ENCODE measurements at regions of chr4 and their contacts with region 1.

Region 1: GRCh38 chr4:52588097-52588782 is 70.9 kb downstream of the USP46 start:
- DNase-seq: peak in 1 of 9 donors; percentile 2
- ATAC-seq: peak; percentile 25
- H3K4me3 ChIP-seq: no peak overlapping the region
- H3K4me3 Mint-ChIP-seq: peak overlapping the region in 1 of 10 donors; percentile 31
- H3K27ac ChIP-seq: no peak overlapping the region
- H3K27ac Mint-ChIP-seq: peak overlapping the region in 2 of 9 donors; percentile 38 to 72
- H3K4me1 ChIP-seq: peaks cover 0 to 5% of the 10 kb centered on the region in 2 donors
- H3K4me1 Mint-ChIP-seq: peaks cover 6 to 24% (median 8%) of the 10 kb centered on the region in 7 donors
- H3K27me3 ChIP-seq: no peaks in the 10 kb centered on the region
- H3K27me3 Mint-ChIP-seq: peaks cover 0 to 10% (median 5%) of the 10 kb centered on the region in 5 donors

Region 2: DNA sequence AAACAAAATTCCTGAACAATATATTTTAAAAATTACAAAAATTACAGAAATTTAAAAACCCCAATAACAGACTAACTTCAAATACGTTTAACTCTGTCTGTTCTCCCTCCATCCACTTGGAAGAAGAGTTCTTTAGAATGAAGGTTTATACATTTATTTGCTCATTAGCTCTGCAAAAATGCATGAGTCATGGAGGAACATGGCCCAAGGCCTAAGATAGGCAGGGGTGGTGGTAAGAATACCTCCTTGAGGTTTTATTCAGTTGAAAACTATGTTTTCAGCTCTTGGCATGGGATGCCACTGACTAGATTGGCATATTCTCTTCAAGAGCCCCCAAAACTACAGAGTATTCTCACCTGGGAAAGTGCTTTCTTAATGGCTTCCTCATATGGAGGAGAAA is 559.3 kb before region 1 on chr4:
- CTCF ChIA-PET with region 1: no interaction called
- POLR2A ChIA-PET with region 1: no interaction called
- intact Hi-C with region 1: no loop called
- DNase-seq: no peak
- ATAC-seq: no peak
- H3K4me3 ChIP-seq: no peak overlapping the region
- H3K4me3 Mint-ChIP-seq: no peak overlapping the region
- H3K27ac ChIP-seq: no peak overlapping the region
- H3K27ac Mint-ChIP-seq: no peak overlapping the region
- H3K4me1 ChIP-seq: no peaks in the 10 kb centered on the region
- H3K4me1 Mint-ChIP-seq: peaks cover 0 to 5% (median 0%) of the 10 kb centered on the region in 7 donors
- H3K27me3 ChIP-seq: no peaks in the 10 kb centered on the region
- H3K27me3 Mint-ChIP-seq: no peaks in the 10 kb centered on the region

Region 3: DNA sequence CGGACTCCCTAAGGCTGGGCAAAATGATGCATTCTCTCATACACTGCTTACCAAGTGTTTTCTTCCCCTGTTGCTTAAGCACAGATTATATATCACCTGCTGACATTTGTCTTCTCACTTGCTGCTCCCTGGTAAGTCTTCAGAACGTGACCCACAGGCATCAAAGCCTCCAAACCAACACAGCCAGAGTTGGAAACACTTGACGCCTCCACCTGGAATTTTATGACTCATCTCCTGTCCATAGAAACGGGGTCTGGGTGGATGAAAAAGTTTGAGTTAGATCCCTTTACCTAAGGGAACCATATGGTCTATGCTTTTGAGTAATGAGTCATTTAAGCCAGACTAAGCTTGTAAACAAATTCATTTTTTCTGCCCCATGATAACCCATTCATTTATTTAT is 180.7 kb before region 1 on chr4:
- CTCF ChIA-PET with region 1: no interaction called
- POLR2A ChIA-PET with region 1: no interaction called
- intact Hi-C with region 1: no loop called
- DNase-seq: no peak
- ATAC-seq: no peak
- H3K4me3 ChIP-seq: no peak overlapping the region
- H3K4me3 Mint-ChIP-seq: no peak overlapping the region
- H3K27ac ChIP-seq: no peak overlapping the region
- H3K27ac Mint-ChIP-seq: no peak overlapping the region
- H3K4me1 ChIP-seq: no peaks in the 10 kb centered on the region
- H3K4me1 Mint-ChIP-seq: no peaks in the 10 kb centered on the region
- H3K27me3 ChIP-seq: no peaks in the 10 kb centered on the region
- H3K27me3 Mint-ChIP-seq: peaks cover 0 to 13% (median 10%) of the 10 kb centered on the region in 5 donors

Region 4: GRCh38 chr4:52600275-52600674 is 12.0 kb after region 1 on chr4:
- CTCF ChIA-PET with region 1: no interaction called
- POLR2A ChIA-PET with region 1: no interaction called
- intact Hi-C with region 1: no loop called
- DNase-seq: no peak
- ATAC-seq: no peak
- H3K4me3 ChIP-seq: no peak overlapping the region
- H3K4me3 Mint-ChIP-seq: no peak overlapping the region
- H3K27ac ChIP-seq: no peak overlapping the region
- H3K27ac Mint-ChIP-seq: no peak overlapping the region
- H3K4me1 ChIP-seq: no peaks in the 10 kb centered on the region
- H3K4me1 Mint-ChIP-seq: peaks cover 0 to 1% (median 0%) of the 10 kb centered on the region in 7 donors
- H3K27me3 ChIP-seq: no peaks in the 10 kb centered on the region
- H3K27me3 Mint-ChIP-seq: no peaks in the 10 kb centered on the region

Region 5: DNA sequence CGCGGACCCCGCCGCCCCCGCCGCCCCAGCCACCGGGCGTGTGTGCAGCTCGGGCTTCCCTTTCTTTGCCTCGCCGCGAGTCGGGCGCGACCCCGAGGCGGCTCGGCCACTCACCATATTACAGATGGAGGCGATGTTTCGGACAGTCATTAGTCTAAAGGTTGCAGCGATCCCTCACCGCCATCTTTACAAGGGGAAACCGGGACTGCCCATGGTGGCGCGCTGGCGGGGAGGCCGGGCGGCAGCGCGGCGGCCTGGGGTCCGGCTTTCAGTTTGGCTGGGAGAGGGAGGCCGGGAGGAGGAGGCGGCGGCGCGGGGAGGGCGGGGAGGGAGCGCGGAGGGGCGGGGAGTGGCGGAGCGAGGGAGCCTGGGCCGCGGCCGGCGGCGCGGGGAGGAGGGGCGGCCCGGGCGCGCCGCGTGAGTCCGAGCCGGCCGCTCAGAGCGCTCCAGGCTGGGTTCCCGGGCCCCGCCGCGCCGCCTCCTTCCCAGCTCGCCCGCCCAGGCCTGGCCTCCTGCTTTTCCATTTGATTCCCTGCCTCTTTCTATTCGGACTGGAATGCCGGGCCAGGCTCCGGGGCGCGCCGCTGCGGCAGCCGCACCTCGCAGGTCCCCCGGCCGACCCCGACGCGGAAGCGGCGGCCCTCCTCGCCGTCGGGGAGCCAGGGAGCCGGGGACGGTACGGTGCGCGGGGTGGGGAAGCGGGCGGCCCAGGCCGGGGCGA is 70.9 kb after region 1 on chr4 and contains the start of gene USP46:
- CTCF ChIA-PET with region 1: no interaction called
- POLR2A ChIA-PET with region 1: no interaction called
- intact Hi-C with region 1: loop called in 1 of 2 experiments (anchors 5 kb)
- DNase-seq: peak in 7 of 9 donors; percentile 3 to 65 (median 15)
- ATAC-seq: peak; percentile 86
- H3K4me3 ChIP-seq: peak within 1 kb of the TSS; percentile 52
- H3K4me3 Mint-ChIP-seq: peak within 1 kb of the TSS; percentile 83 to 92 (median 87)
- H3K27ac ChIP-seq: peak within 1 kb of the TSS; percentile 37
- H3K27ac Mint-ChIP-seq: peak within 1 kb of the TSS in 6 of 9 donors; percentile 12 to 77 (median 58)
- H3K4me1 ChIP-seq: peaks cover 5% of the 10 kb centered on the region in 2 donors
- H3K4me1 Mint-ChIP-seq: peaks cover 12 to 23% (median 17%) of the 10 kb centered on the region in 7 donors
- H3K27me3 ChIP-seq: no peaks in the 10 kb centered on the region
- H3K27me3 Mint-ChIP-seq: peaks cover 0 to 24% (median 16%) of the 10 kb centered on the region in 5 donors
- total RNA-seq, gene USP46: 3.0 to 11.7 (median 4.0) TPM

Region 6: GRCh38 chr4:52665592-52665991 is 77.4 kb after region 1 on chr4:
- CTCF ChIA-PET with region 1: no interaction called
- POLR2A ChIA-PET with region 1: no interaction called
- intact Hi-C with region 1: loop called in 1 of 2 experiments (anchors 1 kb)
- DNase-seq: peak in 1 of 9 donors; percentile 0
- ATAC-seq: peak; percentile 50
- H3K4me3 ChIP-seq: no peak overlapping the region
- H3K4me3 Mint-ChIP-seq: no peak overlapping the region
- H3K27ac ChIP-seq: no peak overlapping the region
- H3K27ac Mint-ChIP-seq: peak overlapping the region in 1 of 9 donors; percentile 32
- H3K4me1 ChIP-seq: peaks cover 0 to under 1% of the 10 kb centered on the region in 2 donors
- H3K4me1 Mint-ChIP-seq: peaks cover 2 to 9% (median 3%) of the 10 kb centered on the region in 7 donors
- H3K27me3 ChIP-seq: no peaks in the 10 kb centered on the region
- H3K27me3 Mint-ChIP-seq: peaks cover 30 to 62% (median 43%) of the 10 kb centered on the region in 5 donors

Region 7: DNA sequence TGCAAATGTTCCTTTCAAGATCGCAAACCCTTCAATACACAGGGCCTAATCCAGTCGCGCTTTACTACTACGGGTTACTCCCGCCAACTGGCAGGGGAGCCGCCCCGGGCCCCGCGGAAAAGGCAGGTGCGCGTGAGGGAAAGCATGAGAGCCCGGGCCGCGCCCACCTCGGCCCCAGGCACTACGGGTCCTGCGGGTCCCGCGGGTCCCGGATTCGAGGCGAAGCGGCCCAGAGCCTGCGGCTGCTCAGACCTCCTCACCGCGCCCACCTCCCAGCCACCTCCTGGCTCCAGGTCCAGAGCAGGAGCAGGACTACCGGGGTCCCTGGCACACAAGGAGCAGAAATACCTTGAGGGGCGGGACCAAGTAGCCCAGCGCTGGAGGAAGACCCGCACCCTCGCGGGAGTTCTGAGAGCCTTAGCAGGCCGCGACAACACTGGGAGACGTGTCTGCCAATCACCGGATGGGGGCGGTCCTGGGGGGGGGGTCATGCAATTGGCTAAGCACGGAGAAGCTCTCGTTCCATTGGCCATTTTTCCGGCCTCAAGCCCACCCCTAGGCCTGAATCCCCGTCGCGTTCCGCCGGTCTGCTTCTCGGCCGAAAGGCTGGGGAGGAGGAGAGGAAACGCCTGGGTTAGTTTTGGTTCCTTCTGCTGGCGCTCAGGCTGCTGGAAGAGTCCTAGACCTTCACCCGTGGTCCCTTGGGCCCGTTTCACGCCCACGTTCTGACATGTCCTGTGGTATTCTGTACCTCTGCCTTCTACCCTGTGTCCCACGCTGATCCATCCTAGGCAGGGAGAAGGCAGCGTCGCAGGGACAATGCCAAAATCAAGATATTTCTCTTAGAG is 134.0 kb after region 1 on chr4:
- CTCF ChIA-PET with region 1: no interaction called
- POLR2A ChIA-PET with region 1: no interaction called
- intact Hi-C with region 1: loop called in 1 of 2 experiments (anchors 5 kb)
- DNase-seq: peak; percentile 62 to 87 (median 81)
- ATAC-seq: peak; percentile 99
- H3K4me3 ChIP-seq: peak overlapping the region; percentile 83
- H3K4me3 Mint-ChIP-seq: peak overlapping the region; percentile 55 to 90 (median 79)
- H3K27ac ChIP-seq: peak overlapping the region; percentile 86
- H3K27ac Mint-ChIP-seq: peak overlapping the region; percentile 54 to 95 (median 86)
- H3K4me1 ChIP-seq: no peaks in the 10 kb centered on the region
- H3K4me1 Mint-ChIP-seq: peaks cover 5 to 14% (median 11%) of the 10 kb centered on the region in 7 donors
- H3K27me3 ChIP-seq: no peaks in the 10 kb centered on the region
- H3K27me3 Mint-ChIP-seq: peaks cover 0 to 11% (median 0%) of the 10 kb centered on the region in 5 donors

Measured in naive thymus-derived CD4-positive, alpha-beta T cell (primary cell).